Breast epithelium (tissue), 4 donors: ENCODE measurements at regions of chr1 and their contacts with region 1.

Region 1: DNA sequence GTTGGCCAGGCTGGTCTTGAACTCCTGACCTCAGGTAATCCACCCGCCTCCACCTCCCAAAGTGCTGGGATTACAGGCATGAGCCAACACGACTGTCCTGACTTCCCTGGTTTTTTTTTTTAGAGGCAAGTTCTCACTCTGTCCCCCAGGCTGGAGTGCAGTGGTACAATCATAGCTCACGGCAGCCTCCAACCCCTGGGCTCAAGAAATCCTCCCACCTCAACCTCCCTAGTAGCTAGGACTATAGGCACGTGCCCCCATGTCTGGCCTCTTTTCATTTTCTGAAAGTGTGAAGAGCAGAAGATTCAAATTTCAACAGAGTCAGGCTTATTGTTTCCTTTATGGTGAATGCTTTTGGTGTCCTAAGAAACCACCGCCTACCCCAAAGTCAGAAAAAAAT is 21.7 kb upstream of the SOX13 start:
- DNase-seq: no peak
- H3K4me3 ChIP-seq: no peak overlapping the region
- H3K27ac ChIP-seq: no peak overlapping the region
- H3K4me1 ChIP-seq: no peaks in the 10 kb centered on the region
- H3K27me3 ChIP-seq: no peaks in the 10 kb centered on the region
- CTCF ChIP-seq: no peak
- POLR2A ChIP-seq: no peak

Region 2: GRCh38 chr1:203504397-203505250 is 546.6 kb before region 1 on chr1:
- intact Hi-C with region 1: loop called (anchors 5 kb)
- DNase-seq: peak; percentile 80 to 84
- H3K4me3 ChIP-seq: no peak overlapping the region
- H3K27ac ChIP-seq: no peak overlapping the region
- H3K4me1 ChIP-seq: peaks cover 0 to 8% of the 10 kb centered on the region in 2 donors
- H3K27me3 ChIP-seq: no peaks in the 10 kb centered on the region
- CTCF ChIP-seq: peak; percentile 84 to 91 (median 87)
- POLR2A ChIP-seq: no peak

Region 3: GRCh38 chr1:204036880-204037655 is 14.2 kb before region 1 on chr1:
- intact Hi-C with region 1: no loop called
- DNase-seq: no peak
- H3K4me3 ChIP-seq: no peak overlapping the region
- H3K27ac ChIP-seq: no peak overlapping the region
- H3K4me1 ChIP-seq: peaks cover 0 to 12% of the 10 kb centered on the region in 2 donors
- H3K27me3 ChIP-seq: no peaks in the 10 kb centered on the region
- CTCF ChIP-seq: no peak
- POLR2A ChIP-seq: no peak

Region 4: GRCh38 chr1:205543411-205544301 is 1492.4 kb after region 1 on chr1:
- intact Hi-C with region 1: no loop called
- DNase-seq: peak; percentile 81 to 94
- H3K4me3 ChIP-seq: peak overlapping the region; percentile 32 to 60 (median 45)
- H3K27ac ChIP-seq: peak overlapping the region; percentile 87 to 93
- H3K4me1 ChIP-seq: peaks cover 0 to 6% of the 10 kb centered on the region in 2 donors
- H3K27me3 ChIP-seq: no peaks in the 10 kb centered on the region
- CTCF ChIP-seq: no peak
- POLR2A ChIP-seq: no peak